ENCODE measurements at regions of chr15 and their contacts with region 1.

Region 1: DNA sequence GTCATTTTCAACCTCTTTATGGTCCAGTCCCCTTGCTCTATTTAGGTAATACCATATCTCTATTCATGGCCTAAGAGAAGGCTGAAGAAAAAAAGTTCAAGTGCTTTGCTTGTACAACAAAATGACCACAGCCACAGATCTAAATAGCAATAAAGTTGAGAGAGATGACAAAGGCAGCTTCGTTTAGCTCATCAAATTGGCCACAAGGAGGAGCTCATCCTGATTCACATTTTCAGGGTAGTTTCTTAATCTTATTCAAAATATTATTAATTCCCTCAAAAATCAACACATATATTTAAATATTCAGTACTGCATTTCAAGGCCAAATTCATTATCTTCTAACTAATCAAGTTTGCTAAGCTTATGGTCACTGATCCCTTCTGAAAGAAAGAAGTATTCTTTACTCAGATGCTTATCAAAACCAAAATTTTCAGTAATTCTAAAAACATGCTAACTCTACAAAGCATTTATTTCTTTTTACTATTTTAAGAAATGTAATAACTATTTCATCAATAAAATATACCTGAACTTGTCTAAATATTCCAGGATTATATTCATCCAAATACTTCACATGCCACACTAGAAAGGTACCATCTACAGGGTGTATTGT is 85.5 kb downstream of the DMXL2 start:
- DNase-seq: no peak
- H3K4me3 ChIP-seq: no peak overlapping the region
- H3K27ac ChIP-seq: no peak overlapping the region
- H3K4me1 ChIP-seq: no peaks in the 10 kb centered on the region
- H3K27me3 ChIP-seq: no peaks in the 10 kb centered on the region
- CTCF ChIP-seq: peak in 3 of 4 experiments; percentile 13 to 40 (median 15)
- EP300 ChIP-seq: no peak
- POLR2A ChIP-seq: no peak

Region 2: GRCh38 chr15:51203797-51204196 is 333.3 kb before region 1 on chr15:
- intact Hi-C with region 1: no loop called
- DNase-seq: no peak
- H3K4me3 ChIP-seq: no peak overlapping the region
- H3K27ac ChIP-seq: no peak overlapping the region
- H3K4me1 ChIP-seq: no peaks in the 10 kb centered on the region
- H3K27me3 ChIP-seq: no peaks in the 10 kb centered on the region
- CTCF ChIP-seq: no peak
- EP300 ChIP-seq: no peak
- POLR2A ChIP-seq: no peak

Region 3: DNA sequence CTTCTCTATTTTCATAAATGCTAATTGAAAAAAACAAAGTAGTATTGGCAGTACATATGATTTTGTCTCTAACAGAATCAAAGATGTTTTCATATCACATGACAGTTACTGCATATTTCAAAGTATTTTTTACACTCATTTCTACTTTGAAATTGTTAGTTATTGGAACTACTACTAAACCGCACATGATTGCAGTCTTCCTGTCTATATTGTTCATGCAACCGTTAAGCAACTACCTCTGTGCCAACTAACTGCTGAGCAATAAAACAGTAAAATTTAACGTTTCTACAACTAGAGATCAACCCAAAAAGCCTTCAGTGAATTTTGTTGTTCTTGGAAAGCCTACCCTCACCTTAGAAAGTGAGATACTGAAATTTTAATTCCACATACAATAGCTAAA is 21.3 kb after region 1 on chr15:
- intact Hi-C with region 1: no loop called
- DNase-seq: no peak
- H3K4me3 ChIP-seq: no peak overlapping the region
- H3K27ac ChIP-seq: no peak overlapping the region
- H3K4me1 ChIP-seq: no peaks in the 10 kb centered on the region
- H3K27me3 ChIP-seq: no peaks in the 10 kb centered on the region
- CTCF ChIP-seq: no peak
- EP300 ChIP-seq: no peak
- POLR2A ChIP-seq: no peak

Region 4: GRCh38 chr15:51622604-51623370 is 85.7 kb after region 1 on chr15 and contains the start of gene DMXL2:
- intact Hi-C with region 1: loop called (anchors 10 kb)
- DNase-seq: peak; percentile 93
- H3K4me3 ChIP-seq: peak within 1 kb of the TSS; percentile 60 to 79 (median 72)
- H3K27ac ChIP-seq: peak within 1 kb of the TSS; percentile 84 to 91 (median 84)
- H3K4me1 ChIP-seq: peaks cover 0 to 18% (median 15%) of the 10 kb centered on the region in 4 donors
- H3K27me3 ChIP-seq: no peaks in the 10 kb centered on the region
- CTCF ChIP-seq: no peak
- EP300 ChIP-seq: no peak
- POLR2A ChIP-seq: no peak
- total RNA-seq, gene DMXL2: 34.6 to 64.5 (median 50.5) TPM

Measured in sigmoid colon (tissue), 7 donors.